CD8-positive, alpha-beta T cell (primary cell): ENCODE measurements at regions of chr18 and their contacts with region 1.

Region 1: GRCh38 chr18:74551936-74552555 is 17.7 kb downstream of the CNDP1 start:
- DNase-seq: peak; percentile 55 to 85 (median 78)
- ATAC-seq: peak; percentile 91
- H3K4me3 ChIP-seq: no peak overlapping the region
- H3K4me3 Mint-ChIP-seq: no peak overlapping the region
- H3K27ac ChIP-seq: no peak overlapping the region
- H3K27ac Mint-ChIP-seq: no peak overlapping the region
- H3K4me1 ChIP-seq: no peaks in the 10 kb centered on the region
- H3K4me1 Mint-ChIP-seq: no peaks in the 10 kb centered on the region
- H3K27me3 ChIP-seq: no peaks in the 10 kb centered on the region
- H3K27me3 Mint-ChIP-seq: peaks cover 13% of the 10 kb centered on the region
- CTCF ChIP-seq: peak; percentile 92

Region 2: GRCh38 chr18:72762515-72763122 is 1789.4 kb before region 1 on chr18:
- CTCF ChIA-PET with region 1: no interaction called
- POLR2A ChIA-PET with region 1: no interaction called
- intact Hi-C with region 1: loop called in 1 of 2 experiments (anchors 10 kb)
- DNase-seq: peak in 2 of 9 experiments; percentile 4 to 42
- ATAC-seq: no peak
- H3K4me3 ChIP-seq: no peak overlapping the region
- H3K4me3 Mint-ChIP-seq: no peak overlapping the region
- H3K27ac ChIP-seq: no peak overlapping the region
- H3K27ac Mint-ChIP-seq: no peak overlapping the region
- H3K4me1 ChIP-seq: no peaks in the 10 kb centered on the region
- H3K4me1 Mint-ChIP-seq: no peaks in the 10 kb centered on the region
- H3K27me3 ChIP-seq: no peaks in the 10 kb centered on the region
- H3K27me3 Mint-ChIP-seq: no peaks in the 10 kb centered on the region
- CTCF ChIP-seq: peak; percentile 64

Region 3: GRCh38 chr18:73842795-73843394 is 709.2 kb before region 1 on chr18:
- CTCF ChIA-PET with region 1: no interaction called
- POLR2A ChIA-PET with region 1: no interaction called
- intact Hi-C with region 1: loop called in 1 of 2 experiments (anchors 5 kb)
- DNase-seq: peak in 7 of 9 experiments; percentile 7 to 56 (median 30)
- ATAC-seq: peak; percentile 49
- H3K4me3 ChIP-seq: no peak overlapping the region
- H3K4me3 Mint-ChIP-seq: peak overlapping the region; percentile 78
- H3K27ac ChIP-seq: no peak overlapping the region
- H3K27ac Mint-ChIP-seq: no peak overlapping the region
- H3K4me1 ChIP-seq: no peaks in the 10 kb centered on the region
- H3K4me1 Mint-ChIP-seq: peaks cover 7% of the 10 kb centered on the region
- H3K27me3 ChIP-seq: no peaks in the 10 kb centered on the region
- H3K27me3 Mint-ChIP-seq: peaks cover 2% of the 10 kb centered on the region
- CTCF ChIP-seq: peak; percentile 94

Region 4: GRCh38 chr18:74040459-74041332 is 511.4 kb before region 1 on chr18:
- CTCF ChIA-PET with region 1: no interaction called
- POLR2A ChIA-PET with region 1: no interaction called
- intact Hi-C with region 1: loop called in 1 of 2 experiments (anchors 2 kb)
- DNase-seq: peak; percentile 22 to 70 (median 62)
- ATAC-seq: peak; percentile 86
- H3K4me3 ChIP-seq: no peak overlapping the region
- H3K4me3 Mint-ChIP-seq: no peak overlapping the region
- H3K27ac ChIP-seq: no peak overlapping the region
- H3K27ac Mint-ChIP-seq: no peak overlapping the region
- H3K4me1 ChIP-seq: no peaks in the 10 kb centered on the region
- H3K4me1 Mint-ChIP-seq: no peaks in the 10 kb centered on the region
- H3K27me3 ChIP-seq: peaks cover 0 to 2% of the 10 kb centered on the region in 2 experiments
- H3K27me3 Mint-ChIP-seq: no peaks in the 10 kb centered on the region
- CTCF ChIP-seq: peak; percentile 67

Region 5: DNA sequence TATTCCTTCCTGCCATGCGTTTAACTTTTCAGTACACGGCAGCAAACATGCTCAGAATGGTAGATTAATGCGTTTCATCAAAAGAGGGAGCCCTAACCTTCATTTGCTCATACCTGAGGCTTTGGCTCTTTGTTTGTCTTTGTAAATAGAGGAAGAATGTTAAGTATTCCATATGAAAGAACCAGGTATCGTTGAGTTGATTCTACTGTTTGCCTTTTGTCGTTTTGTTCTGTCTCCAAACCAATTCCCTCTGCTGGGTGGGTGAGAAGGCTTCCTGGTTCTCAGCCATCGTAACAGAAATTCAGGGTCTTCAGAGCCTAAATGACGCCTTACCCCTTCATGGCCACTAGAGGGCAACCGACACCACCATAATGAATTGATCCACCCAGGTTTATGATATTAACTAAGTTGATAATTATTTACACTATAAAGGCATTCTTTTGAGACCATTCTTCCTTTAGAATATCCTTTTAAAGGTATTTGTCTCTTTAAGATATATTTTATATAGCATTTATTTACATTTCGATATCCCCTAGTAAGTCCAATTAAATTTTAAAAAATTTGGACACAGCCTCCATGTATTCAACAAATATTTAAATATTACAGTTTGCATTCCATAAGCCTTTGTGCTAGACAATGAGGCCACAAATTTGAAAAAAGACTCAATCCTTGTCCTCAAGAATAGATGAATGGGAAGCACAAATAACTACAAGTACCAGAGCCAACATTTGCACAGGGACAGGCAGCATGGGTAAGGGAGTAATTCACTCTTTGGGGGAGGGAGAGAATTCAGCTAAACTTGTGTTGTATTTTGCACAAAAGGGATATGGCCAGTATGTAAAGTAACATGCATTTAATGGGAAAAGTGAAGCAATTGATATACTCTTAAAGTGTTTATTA is 355.6 kb before region 1 on chr18:
- CTCF ChIA-PET with region 1: interaction called, 32 read pairs
- POLR2A ChIA-PET with region 1: interaction called, 3 read pairs
- intact Hi-C with region 1: loop called (anchors 1 kb)
- DNase-seq: peak; percentile 8 to 86 (median 46)
- ATAC-seq: peak; percentile 98
- H3K4me3 ChIP-seq: peak overlapping the region; percentile 21 to 42
- H3K4me3 Mint-ChIP-seq: peak overlapping the region; percentile 79
- H3K27ac ChIP-seq: no peak overlapping the region
- H3K27ac Mint-ChIP-seq: peak overlapping the region; percentile 85
- H3K4me1 ChIP-seq: peaks cover 4% of the 10 kb centered on the region
- H3K4me1 Mint-ChIP-seq: peaks cover 6% of the 10 kb centered on the region
- H3K27me3 ChIP-seq: no peaks in the 10 kb centered on the region
- H3K27me3 Mint-ChIP-seq: peaks cover 18% of the 10 kb centered on the region
- CTCF ChIP-seq: peak; percentile 89

Region 6: DNA sequence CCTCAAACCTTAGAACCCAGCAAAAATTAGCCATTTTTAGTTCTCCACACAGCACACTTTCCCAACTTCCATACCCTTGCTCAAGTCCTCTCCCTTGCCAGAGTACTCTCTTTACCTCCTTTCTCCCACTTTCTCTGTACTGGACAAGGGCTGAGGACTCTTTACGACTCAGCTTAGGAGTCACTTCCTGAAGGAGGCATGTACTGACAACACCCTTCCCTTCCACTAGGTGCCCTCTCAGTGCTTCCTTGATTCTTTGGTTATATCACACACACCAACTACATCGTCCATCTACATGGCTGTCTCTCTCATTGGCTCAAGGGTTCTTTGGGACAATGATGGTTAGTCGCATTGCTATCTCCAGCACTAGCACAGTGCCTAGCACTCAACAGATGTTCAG is 241.6 kb before region 1 on chr18:
- CTCF ChIA-PET with region 1: interaction called, 3 read pairs
- POLR2A ChIA-PET with region 1: no interaction called
- intact Hi-C with region 1: loop called in 1 of 2 experiments (anchors 1 kb)
- DNase-seq: peak in 2 of 9 experiments; percentile 41 to 55
- ATAC-seq: peak; percentile 73
- H3K4me3 ChIP-seq: no peak overlapping the region
- H3K4me3 Mint-ChIP-seq: no peak overlapping the region
- H3K27ac ChIP-seq: no peak overlapping the region
- H3K27ac Mint-ChIP-seq: no peak overlapping the region
- H3K4me1 ChIP-seq: no peaks in the 10 kb centered on the region
- H3K4me1 Mint-ChIP-seq: peaks cover 4% of the 10 kb centered on the region
- H3K27me3 ChIP-seq: no peaks in the 10 kb centered on the region
- H3K27me3 Mint-ChIP-seq: peaks cover 29% of the 10 kb centered on the region
- CTCF ChIP-seq: no peak

Region 7: GRCh38 chr18:74714791-74715190 is 162.7 kb after region 1 on chr18:
- CTCF ChIA-PET with region 1: no interaction called
- POLR2A ChIA-PET with region 1: no interaction called
- intact Hi-C with region 1: no loop called
- DNase-seq: no peak
- ATAC-seq: no peak
- H3K4me3 ChIP-seq: no peak overlapping the region
- H3K4me3 Mint-ChIP-seq: no peak overlapping the region
- H3K27ac ChIP-seq: no peak overlapping the region
- H3K27ac Mint-ChIP-seq: no peak overlapping the region
- H3K4me1 ChIP-seq: no peaks in the 10 kb centered on the region
- H3K4me1 Mint-ChIP-seq: peaks cover 3% of the 10 kb centered on the region
- H3K27me3 ChIP-seq: no peaks in the 10 kb centered on the region
- H3K27me3 Mint-ChIP-seq: no peaks in the 10 kb centered on the region
- CTCF ChIP-seq: no peak